Endothelial cell of umbilical vein (primary cell): ENCODE measurements at regions of chr10 and their contacts with region 1.

Region 1: DNA sequence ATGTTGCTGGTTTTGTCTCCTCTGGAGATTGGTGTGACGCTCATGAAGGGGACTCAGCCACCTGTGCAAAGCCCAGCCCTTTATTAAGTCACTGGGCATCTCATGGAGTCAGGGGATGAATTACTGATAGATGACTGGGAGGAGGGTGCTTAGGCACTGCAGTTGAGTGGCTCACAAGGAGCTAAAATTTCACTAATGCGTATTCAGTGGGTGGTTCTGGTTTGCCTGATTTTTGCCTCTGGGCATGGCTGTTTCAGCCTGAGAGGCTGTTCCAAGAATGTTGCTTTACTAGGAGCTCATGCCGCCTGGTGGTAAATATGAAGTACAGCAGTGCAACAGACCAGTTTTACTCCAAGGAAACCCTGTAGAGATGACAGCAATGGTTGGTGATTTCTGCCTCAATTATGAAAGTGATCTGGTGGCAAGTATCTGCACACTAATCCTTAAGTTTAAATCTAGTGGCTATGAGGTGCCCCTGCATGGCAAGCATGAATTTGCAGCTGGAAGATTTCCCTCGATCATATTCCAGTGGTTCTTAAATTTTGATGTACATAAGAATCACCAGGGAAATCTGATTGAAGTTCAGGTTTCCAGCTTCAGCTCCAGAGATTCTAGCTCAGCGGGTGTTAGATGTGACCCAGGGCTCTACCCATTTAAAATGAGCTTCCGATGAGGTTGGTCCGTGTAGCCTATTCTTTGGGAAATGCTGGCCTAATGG is 19.9 kb downstream of the ACTA2 start:
- DNase-seq: peak; percentile 55
- H3K4me3 ChIP-seq: no peak overlapping the region
- H3K27ac ChIP-seq: no peak overlapping the region
- H3K4me1 ChIP-seq: peaks cover 4% of the 10 kb centered on the region
- H3K27me3 ChIP-seq: peaks cover 0 to 2% of the 10 kb centered on the region in 2 experiments
- CTCF ChIP-seq: peak; percentile 75 to 84
- POLR2A ChIP-seq: no peak

Region 2: DNA sequence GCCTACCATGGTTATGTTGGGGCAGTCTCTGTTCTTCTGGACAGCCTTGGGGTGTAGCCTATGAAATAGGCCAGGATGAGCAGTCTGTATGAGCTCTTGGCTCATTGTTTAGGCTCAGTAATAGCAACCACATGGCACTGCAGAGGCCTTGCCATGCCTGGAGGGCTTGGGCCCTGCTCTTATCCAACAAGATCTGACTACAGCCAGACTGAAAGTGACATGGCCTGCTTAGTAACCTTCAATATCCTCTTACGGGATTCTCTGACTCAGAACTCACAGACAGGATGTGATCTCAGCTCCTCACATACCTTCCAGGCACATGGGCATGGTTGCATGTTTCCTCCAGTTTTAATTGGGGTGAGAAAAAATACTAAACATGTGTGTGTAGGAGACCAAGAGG is 780.0 kb before region 1 on chr10:
- CTCF ChIA-PET with region 1: no interaction called
- POLR2A ChIA-PET with region 1: no interaction called
- dilution Hi-C with region 1: no loop called
- intact Hi-C with region 1: loop called (anchors 5 kb)
- DNase-seq: peak; percentile 89
- H3K4me3 ChIP-seq: no peak overlapping the region
- H3K27ac ChIP-seq: peak overlapping the region; percentile 92
- H3K4me1 ChIP-seq: peaks cover 33% of the 10 kb centered on the region
- H3K27me3 ChIP-seq: no peaks in the 10 kb centered on the region
- CTCF ChIP-seq: no peak
- POLR2A ChIP-seq: peak; percentile 76

Region 3: DNA sequence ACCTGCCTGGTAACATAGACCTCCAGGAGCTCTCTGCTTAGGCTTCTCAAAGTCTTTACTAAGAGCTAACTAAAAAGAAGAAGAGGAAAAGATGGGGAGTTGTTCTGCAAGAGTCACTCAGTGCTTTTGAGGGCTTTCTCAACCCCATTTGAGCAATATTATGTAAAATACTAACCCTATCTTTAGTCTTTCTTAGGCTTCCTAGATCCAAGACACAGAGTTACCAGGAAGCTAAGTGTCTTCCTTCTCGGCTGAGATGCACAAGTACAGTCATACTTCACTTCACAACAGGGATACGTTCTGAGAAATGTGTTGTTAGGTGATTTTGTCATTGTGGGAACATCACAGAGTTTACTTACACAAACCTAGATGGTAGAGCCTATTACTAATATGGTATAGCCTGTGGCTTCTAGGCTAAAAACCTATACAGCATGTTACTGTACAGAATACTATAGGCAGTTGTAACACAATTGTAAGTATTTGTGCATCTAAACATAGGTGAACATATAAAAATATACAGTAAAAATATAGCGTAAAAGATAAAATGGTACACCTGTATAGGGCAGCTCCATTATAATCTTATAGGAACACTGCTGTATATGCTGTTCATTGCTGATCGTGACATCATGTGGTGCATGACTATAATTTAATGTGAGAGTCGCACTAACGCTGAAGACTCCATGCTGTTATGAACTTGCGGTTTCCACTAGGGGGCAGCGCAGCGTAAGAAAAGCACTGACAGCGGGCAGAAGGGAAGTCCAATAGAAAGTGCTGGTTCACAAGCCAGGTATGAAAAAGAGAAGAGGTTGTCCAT is 97.4 kb before region 1 on chr10:
- CTCF ChIA-PET with region 1: interaction called, 584 read pairs
- POLR2A ChIA-PET with region 1: interaction called, 4 read pairs
- dilution Hi-C with region 1: no loop called
- intact Hi-C with region 1: loop called (anchors 1 kb)
- DNase-seq: peak; percentile 85
- H3K4me3 ChIP-seq: no peak overlapping the region
- H3K27ac ChIP-seq: no peak overlapping the region
- H3K4me1 ChIP-seq: no peaks in the 10 kb centered on the region
- H3K27me3 ChIP-seq: peaks cover 0 to 2% of the 10 kb centered on the region in 2 experiments
- CTCF ChIP-seq: peak; percentile 83 to 88
- POLR2A ChIP-seq: no peak

Region 4: DNA sequence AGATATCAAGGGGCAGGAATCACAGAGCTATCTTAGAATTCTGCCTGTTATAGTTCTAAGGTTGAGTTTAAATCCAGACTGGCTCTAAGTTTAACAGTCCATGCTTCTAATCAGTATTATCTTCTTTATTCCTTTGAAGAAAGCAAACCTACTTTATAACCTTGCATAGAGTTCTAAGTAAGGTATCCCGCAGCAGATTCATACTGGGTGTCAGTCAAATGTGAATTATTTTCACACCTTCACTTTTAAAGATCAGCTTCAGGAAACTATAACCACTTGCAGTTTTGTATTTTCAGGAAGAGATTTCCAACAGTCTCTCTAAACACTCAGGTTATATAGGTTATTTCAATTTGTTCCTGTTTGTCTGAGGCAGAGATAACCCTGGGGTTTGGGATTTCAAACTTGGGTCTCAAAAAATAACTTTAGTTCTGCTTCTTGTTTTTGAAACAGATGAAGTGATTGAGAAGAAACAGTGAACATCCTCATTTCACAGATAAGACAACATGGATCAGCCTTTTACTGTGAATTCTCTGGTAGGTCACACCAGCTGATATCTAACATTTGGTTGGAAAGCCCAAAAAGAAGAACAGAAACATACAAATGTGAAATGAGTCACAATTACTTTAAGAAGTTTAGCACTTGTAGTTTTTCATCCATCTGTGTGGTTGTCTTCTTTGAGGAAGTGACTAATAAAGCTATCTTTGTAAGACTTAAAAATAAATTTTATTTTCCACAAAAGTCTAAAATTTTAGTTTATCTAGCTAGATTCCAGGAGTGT is 31.3 kb before region 1 on chr10:
- CTCF ChIA-PET with region 1: interaction called, 16 read pairs
- POLR2A ChIA-PET with region 1: no interaction called
- dilution Hi-C with region 1: no loop called
- intact Hi-C with region 1: no loop called
- DNase-seq: no peak
- H3K4me3 ChIP-seq: no peak overlapping the region
- H3K27ac ChIP-seq: no peak overlapping the region
- H3K4me1 ChIP-seq: no peaks in the 10 kb centered on the region
- H3K27me3 ChIP-seq: no peaks in the 10 kb centered on the region
- CTCF ChIP-seq: no peak
- POLR2A ChIP-seq: no peak

Region 5: GRCh38 chr10:88990384-88991160 is 57.9 kb after region 1 on chr10 and contains the start of gene FAS:
- CTCF ChIA-PET with region 1: interaction called, 103 read pairs
- POLR2A ChIA-PET with region 1: no interaction called
- dilution Hi-C with region 1: no loop called
- intact Hi-C with region 1: loop called (anchors 1 kb)
- DNase-seq: peak; percentile 53
- H3K4me3 ChIP-seq: peak within 1 kb of the TSS; percentile 76 to 84 (median 84)
- H3K27ac ChIP-seq: peak within 1 kb of the TSS; percentile 6
- H3K4me1 ChIP-seq: peaks cover 12% of the 10 kb centered on the region
- H3K27me3 ChIP-seq: peaks cover 11 to 22% of the 10 kb centered on the region in 2 experiments
- CTCF ChIP-seq: no peak
- POLR2A ChIP-seq: no peak
- total RNA-seq, gene FAS: 6.0 and 6.1 TPM in 2 replicates

Region 6: DNA sequence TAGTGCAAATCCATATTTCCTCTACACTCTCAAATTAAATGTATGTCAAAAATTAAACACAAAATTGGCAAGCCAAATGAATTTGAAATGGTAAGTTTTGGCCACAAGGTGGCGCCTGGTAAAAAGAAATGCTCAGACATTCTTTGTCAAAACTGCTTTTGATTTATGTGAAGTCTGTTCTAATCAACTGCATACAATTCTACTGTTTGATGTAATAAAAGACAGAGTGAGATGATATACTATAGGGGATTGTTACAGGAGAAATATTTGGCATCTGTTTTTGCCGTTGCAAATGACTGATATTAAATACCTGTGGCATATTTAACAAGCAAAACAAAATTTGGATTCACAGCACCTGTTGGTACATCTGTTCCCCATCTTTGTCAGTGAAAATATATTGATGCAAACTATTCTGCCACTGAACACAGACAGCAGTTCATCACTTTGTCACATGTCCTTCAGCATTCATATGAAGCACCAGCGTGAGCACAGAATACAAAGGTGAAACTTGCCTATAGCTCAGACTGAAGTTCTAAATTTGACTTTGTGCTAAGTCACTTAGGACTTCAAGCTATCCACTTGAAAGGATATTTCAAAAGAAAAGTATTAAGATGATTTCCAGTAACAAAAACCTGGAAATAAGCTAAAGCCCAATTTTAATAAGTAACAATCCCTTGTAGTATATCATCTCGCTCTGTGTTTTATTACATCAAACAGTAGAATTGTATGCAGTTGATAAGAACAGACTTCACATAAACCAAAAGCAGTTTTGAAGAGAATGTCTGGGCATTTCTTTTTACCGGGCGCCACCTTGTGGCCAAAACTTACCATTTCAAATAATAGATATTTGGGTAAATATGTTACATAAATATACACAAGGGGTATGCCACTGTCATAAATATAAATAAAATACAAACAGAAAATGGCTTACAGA is 284.6 kb after region 1 on chr10:
- CTCF ChIA-PET with region 1: interaction called, 104 read pairs
- POLR2A ChIA-PET with region 1: no interaction called
- dilution Hi-C with region 1: no loop called
- intact Hi-C with region 1: loop called (anchors 1 kb)
- DNase-seq: peak; percentile 80
- H3K4me3 ChIP-seq: no peak overlapping the region
- H3K27ac ChIP-seq: no peak overlapping the region
- H3K4me1 ChIP-seq: peaks cover 9% of the 10 kb centered on the region
- H3K27me3 ChIP-seq: no peaks in the 10 kb centered on the region
- CTCF ChIP-seq: peak; percentile 47 to 51
- POLR2A ChIP-seq: no peak